GM18951 (cell line): ENCODE measurements at regions of chr11 and their contacts with region 1.

Region 1: DNA sequence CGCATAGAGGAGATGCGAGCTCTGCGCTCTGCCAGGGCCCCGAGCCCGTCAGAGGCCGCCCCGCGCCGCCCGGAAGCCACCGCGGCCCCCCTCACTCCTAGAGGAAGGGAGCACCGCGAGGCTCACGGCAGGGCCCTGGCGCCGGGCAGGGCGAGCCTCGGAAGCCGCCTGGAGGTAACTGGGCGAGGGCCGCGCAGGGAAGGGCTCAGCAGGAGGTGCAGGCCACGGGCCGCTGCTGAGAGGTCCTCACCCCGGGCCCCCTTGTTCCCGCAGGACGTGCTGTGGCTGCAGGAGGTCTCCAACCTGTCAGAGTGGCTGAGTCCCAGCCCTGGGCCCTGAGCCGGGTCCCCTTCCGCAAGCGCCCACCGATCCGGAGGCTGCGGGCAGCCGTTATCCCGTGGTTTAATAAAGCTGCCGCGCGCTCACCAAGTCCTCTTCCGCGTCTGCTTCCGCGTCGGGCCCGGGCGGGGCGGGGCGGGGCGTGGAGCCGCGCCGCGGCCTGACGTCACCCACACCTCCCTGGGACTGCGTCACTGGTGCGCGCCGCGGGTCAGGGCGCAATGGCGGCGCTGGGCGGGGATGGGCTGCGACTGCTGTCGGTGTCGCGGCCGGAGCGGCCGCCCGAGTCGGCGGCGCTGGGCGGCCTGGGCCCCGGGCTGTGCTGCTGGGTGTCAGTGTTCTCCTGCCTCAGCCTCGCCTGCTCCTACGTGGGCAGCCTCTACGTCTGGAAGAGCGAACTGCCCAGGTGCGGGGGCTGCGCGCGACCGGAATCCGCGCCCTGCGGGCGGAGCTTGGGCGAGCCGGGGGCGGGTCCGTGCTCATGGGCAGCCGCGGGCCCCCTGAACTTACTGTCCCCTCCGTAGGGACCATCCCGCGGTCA is at the start of gene RCE1:
- POLR2A ChIP-seq: peak; percentile 96

Region 2: GRCh38 chr11:66568124-66568916 is 274.8 kb before region 1 on chr11 and contains the start of gene CTSF:
- in situ Hi-C with region 1: loop called (anchors 25 kb)
- POLR2A ChIP-seq: no peak

Region 3: GRCh38 chr11:67160874-67161783 is 318.0 kb after region 1 on chr11:
- in situ Hi-C with region 1: no loop called
- POLR2A ChIP-seq: no peak